ENCODE measurements at regions of chr19 and their contacts with region 1.

Region 1: DNA sequence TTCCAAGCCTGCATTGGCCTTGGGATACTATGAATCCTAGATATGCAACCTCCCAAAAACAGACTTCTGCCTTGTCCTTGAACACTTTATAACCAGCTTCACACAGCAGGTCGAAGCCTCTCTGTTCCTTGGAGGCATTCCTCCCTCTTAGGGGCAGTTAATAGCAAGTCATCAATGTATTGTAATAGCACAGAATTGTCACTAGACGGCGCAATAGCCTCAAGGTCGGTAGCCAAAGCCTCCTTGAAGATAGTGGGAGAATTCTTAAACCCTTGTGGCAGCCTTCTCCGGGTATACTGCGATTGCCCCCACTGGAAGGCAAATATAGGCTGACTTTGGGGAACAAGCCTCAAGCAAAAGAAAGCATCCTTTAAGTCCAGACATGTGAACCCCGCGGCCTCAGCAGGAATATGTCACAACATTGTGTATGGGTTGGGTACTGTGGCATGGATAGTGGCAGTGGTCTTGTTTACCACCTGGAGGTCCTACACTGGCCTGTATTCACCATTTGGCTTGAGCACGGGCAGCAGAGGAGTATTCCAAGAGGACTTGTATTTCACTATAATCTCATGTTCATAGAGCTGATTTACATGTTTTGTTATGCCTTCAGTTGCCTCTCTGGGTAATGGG is 61.1 kb downstream of the ZNF431 start:
- DNase-seq: no peak
- H3K4me3 Mint-ChIP-seq: no peak overlapping the region
- H3K27ac Mint-ChIP-seq: no peak overlapping the region
- H3K4me1 Mint-ChIP-seq: no peaks in the 10 kb centered on the region
- H3K27me3 Mint-ChIP-seq: no peaks in the 10 kb centered on the region

Region 2: GRCh38 chr19:21158523-21159135 is 44.4 kb before region 1 on chr19:
- intact Hi-C with region 1: no loop called
- DNase-seq: no peak
- H3K4me3 Mint-ChIP-seq: no peak overlapping the region
- H3K27ac Mint-ChIP-seq: no peak overlapping the region
- H3K4me1 Mint-ChIP-seq: no peaks in the 10 kb centered on the region
- H3K27me3 Mint-ChIP-seq: no peaks in the 10 kb centered on the region

Region 3: DNA sequence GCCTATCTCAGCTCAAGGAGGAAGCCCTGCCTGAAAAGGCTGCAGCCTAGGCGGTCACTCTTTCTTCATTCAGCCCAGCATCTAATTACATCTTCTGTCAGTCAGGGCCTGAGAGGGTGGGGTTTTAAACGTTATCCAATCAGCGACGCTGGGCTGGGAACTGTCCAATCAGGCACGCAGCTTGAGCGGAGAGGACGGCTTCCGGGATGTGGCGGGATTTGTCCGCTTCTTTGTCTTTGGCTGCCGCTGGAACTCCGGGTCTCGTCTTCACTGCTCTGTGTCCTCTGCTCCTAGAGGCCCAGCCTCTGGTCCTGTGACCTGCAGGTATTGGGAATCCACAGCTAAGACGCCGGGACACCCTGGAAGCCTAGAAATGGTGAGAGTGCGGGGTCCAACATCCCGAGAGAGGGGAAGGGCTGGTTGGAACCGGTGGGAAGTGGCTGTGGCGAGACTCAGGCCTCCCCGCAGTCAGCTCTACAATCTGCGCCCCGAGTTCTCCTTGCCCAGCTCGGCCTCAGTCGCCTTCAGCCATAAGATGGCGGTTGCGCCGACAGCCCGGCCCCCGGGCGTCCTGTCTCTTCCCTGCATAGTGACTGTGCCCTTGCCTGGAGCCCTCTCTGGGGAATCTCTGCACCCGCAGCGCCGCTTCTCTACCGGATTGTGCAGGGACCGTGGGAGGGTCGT is 155.9 kb after region 1 on chr19 and contains the start of gene ZNF738:
- intact Hi-C with region 1: no loop called
- DNase-seq: peak; percentile 82
- H3K4me3 Mint-ChIP-seq: peak within 1 kb of the TSS; percentile 99
- H3K27ac Mint-ChIP-seq: peak within 1 kb of the TSS; percentile 98
- H3K4me1 Mint-ChIP-seq: peaks cover 6% of the 10 kb centered on the region
- H3K27me3 Mint-ChIP-seq: no peaks in the 10 kb centered on the region
- total RNA-seq, gene ZNF738: 12.5 and 13.7 TPM in 2 replicates

Region 4: GRCh38 chr19:21482863-21483276 is 279.9 kb after region 1 on chr19:
- intact Hi-C with region 1: loop called (anchors 5 kb)
- DNase-seq: peak; percentile 22
- H3K4me3 Mint-ChIP-seq: no peak overlapping the region
- H3K27ac Mint-ChIP-seq: no peak overlapping the region
- H3K4me1 Mint-ChIP-seq: no peaks in the 10 kb centered on the region
- H3K27me3 Mint-ChIP-seq: no peaks in the 10 kb centered on the region

Region 5: DNA sequence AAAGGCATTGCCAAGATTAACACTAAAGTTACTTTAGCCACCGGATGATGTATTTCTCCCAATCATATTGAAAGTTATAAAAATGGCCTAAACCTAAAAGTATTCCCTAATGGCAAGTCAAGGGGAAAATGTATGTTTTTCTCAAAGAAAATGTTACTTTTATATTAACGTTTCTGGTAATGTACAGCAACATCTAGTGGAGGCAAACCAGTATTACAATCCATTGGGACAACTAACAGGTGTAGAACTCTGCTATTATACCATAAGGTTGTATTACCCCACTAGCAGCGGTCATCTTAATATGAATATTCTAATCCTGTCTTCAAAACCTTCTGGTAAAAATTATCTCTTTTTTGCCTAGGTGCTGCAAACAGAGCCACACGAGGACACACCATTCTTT is 495.2 kb after region 1 on chr19:
- intact Hi-C with region 1: loop called (anchors 5 kb)
- DNase-seq: no peak
- H3K4me3 Mint-ChIP-seq: no peak overlapping the region
- H3K27ac Mint-ChIP-seq: no peak overlapping the region
- H3K4me1 Mint-ChIP-seq: no peaks in the 10 kb centered on the region
- H3K27me3 Mint-ChIP-seq: no peaks in the 10 kb centered on the region

Measured in activated T-helper 2 cell treated with anti-CD3 and anti-CD28 coated beads, Interferon-gamma antibody, Interleukin-2, Interleukin-4, amounts not matched to agents 10 μg/mL and 5 μg/mL and 100 μg/mL, durations not matched to agents 14 hours and 24 hours and 36 hours (primary cell).